WTC11 (cell line): ENCODE measurements at regions of chr17 and their contacts with region 1.

Region 1: GRCh38 chr17:39812466-39812865 is 51.6 kb downstream of the IKZF3 start:
- DNase-seq: no peak
- ATAC-seq: no peak
- H3K4me3 Mint-ChIP-seq: no peak overlapping the region
- H3K27ac Mint-ChIP-seq: no peak overlapping the region
- H3K4me1 Mint-ChIP-seq: peaks cover 14% of the 10 kb centered on the region
- H3K27me3 Mint-ChIP-seq: no peaks in the 10 kb centered on the region
- CTCF ChIP-seq: no peak

Region 2: GRCh38 chr17:39835038-39835786 is 22.7 kb after region 1 on chr17:
- CTCF ChIA-PET with region 1: interaction called, 14 read pairs
- POLR2A ChIA-PET with region 1: no interaction called
- DNase-seq: peak; percentile 38
- ATAC-seq: peak; percentile 81
- H3K4me3 Mint-ChIP-seq: no peak overlapping the region
- H3K27ac Mint-ChIP-seq: no peak overlapping the region
- H3K4me1 Mint-ChIP-seq: no peaks in the 10 kb centered on the region
- H3K27me3 Mint-ChIP-seq: no peaks in the 10 kb centered on the region; the same call in none of the 2 replicates
- CTCF ChIP-seq: no peak